AG04449 (cell line): ENCODE measurements at regions of chr1 and their contacts with region 1.

Region 1: GRCh38 chr1:226547754-226548191 is 791 bp upstream of the STUM start:
- DNase-seq: peak; percentile 37
- H3K4me3 ChIP-seq: no peak overlapping the region
- CTCF ChIP-seq: peak; percentile 94

Region 2: GRCh38 chr1:226560243-226560642 is 12.5 kb after region 1 on chr1:
- CTCF ChIA-PET with region 1: interaction called, 11 read pairs
- POLR2A ChIA-PET with region 1: no interaction called
- DNase-seq: no peak
- H3K4me3 ChIP-seq: no peak overlapping the region
- CTCF ChIP-seq: no peak

Region 3: GRCh38 chr1:226603022-226603857 is 55.5 kb after region 1 on chr1:
- CTCF ChIA-PET with region 1: interaction called, 15 read pairs
- POLR2A ChIA-PET with region 1: no interaction called
- DNase-seq: no peak
- H3K4me3 ChIP-seq: no peak overlapping the region
- CTCF ChIP-seq: no peak

Region 4: GRCh38 chr1:226608699-226609505 is 61.1 kb after region 1 on chr1:
- CTCF ChIA-PET with region 1: interaction called, 15 read pairs
- POLR2A ChIA-PET with region 1: no interaction called
- DNase-seq: no peak
- H3K4me3 ChIP-seq: no peak overlapping the region
- CTCF ChIP-seq: peak; percentile 80